HepG2 (cell line): ENCODE measurements at regions of chr1 and their contacts with region 1.

Region 1: GRCh38 chr1:215863796-215864195 is 296.7 kb downstream of the KCTD3 start:
- DNase-seq: no peak
- ATAC-seq: no peak
- H3K4me3 ChIP-seq: no peak overlapping the region
- H3K27ac ChIP-seq: no peak overlapping the region
- H3K4me1 ChIP-seq: 0 out of 2 replicates have a peak, but pooled peaks cover 6% of the 10 kb centered on the region
- H3K27me3 ChIP-seq: no peaks in the 10 kb centered on the region
- CTCF ChIP-seq: no peak
- EP300 ChIP-seq: no peak
- POLR2A ChIP-seq: no peak
- RAD21 ChIP-seq: no peak

Region 2: DNA sequence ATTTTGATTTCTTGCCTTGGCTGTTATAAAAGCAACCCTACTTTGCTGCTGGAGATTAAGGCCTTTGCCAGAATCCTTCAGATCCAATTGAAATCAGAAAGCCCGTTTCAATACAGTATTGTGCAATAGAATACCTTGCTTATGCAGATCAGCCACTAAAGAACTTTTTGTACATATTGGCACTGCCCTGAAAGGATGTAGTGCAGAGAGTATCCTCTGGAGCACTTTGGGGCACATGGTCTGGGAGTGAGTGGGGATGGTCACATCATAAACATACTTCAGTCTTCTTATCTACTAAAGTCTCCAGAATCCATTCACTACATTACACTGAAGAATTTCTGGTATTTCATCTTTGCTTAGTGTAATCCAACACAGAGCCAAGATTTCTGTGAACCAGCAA is 1071.8 kb before region 1 on chr1:
- CTCF ChIA-PET with region 1: no interaction called
- POLR2A ChIA-PET with region 1: no interaction called
- in situ Hi-C with region 1: no loop called
- intact Hi-C with region 1: loop called (anchors 5 kb)
- DNase-seq: no peak
- ATAC-seq: no peak
- H3K4me3 ChIP-seq: no peak overlapping the region
- H3K27ac ChIP-seq: no peak overlapping the region
- H3K4me1 ChIP-seq: no peaks in the 10 kb centered on the region
- H3K27me3 ChIP-seq: no peaks in the 10 kb centered on the region
- CTCF ChIP-seq: no peak
- EP300 ChIP-seq: no peak
- POLR2A ChIP-seq: no peak
- RAD21 ChIP-seq: no peak